ENCODE measurements at regions of chr7 and their contacts with region 1.

Region 1: GRCh38 chr7:44087911-44088838 is 5.8 kb upstream of the POLM start:
- DNase-seq: peak; percentile 58 to 78
- ATAC-seq: peak; percentile 43 to 82 (median 72)
- H3K4me3 ChIP-seq: no peak overlapping the region
- H3K27ac ChIP-seq: peak overlapping the region; percentile 67 to 88 (median 80)
- H3K4me1 ChIP-seq: peaks cover 0 to 31% (median 20%) of the 10 kb centered on the region in 9 donors
- H3K27me3 ChIP-seq: no peaks in the 10 kb centered on the region
- CTCF ChIP-seq: no peak

Region 2: DNA sequence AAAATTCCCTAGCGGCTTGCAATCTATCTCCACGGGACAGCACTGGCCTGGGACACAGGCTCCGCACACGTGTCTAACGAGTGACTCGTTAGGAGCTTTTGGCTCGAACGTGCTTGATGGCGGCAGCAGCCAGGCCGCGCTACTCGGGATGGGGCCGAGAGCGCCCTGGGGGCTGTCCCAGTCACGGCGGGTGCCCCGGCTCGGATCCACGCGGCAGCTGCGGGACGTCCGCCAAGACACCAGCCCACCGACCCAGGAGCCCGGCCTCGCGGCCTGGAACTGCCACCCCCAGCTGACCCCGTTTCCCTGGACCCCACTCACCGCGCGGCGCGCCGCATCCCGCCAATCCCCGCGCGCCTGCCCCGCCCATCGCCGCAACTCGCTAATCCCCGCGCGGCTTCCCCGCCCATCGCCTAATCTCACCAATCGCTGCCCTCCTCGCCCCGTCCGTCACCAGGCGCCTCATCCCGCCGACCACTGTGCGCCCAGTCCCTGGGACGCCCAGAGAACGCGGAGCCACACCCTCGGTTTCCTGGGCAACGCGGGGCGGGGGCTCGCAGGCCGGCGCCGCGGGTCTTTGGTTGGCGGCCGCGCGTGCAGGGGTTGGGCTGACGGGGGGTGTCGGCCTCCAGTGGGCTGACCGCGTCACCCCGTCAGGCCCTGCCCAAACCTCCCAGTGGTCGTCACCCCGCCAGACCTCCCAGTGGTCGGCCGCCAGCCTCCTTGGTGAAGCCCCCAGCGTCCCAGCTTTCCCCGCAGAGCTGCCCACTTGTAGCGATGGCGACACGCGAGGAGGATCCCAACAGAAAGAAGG is 35.2 kb after region 1 on chr7 and contains the start of gene POLD2:
- intact Hi-C with region 1: loop called in 6 of 10 experiments (anchors 2 to 5 kb)
- DNase-seq: peak; percentile 99
- ATAC-seq: peak; percentile 98 to 99 (median 99)
- H3K4me3 ChIP-seq: peak within 1 kb of the TSS; percentile 33 to 90 (median 74)
- H3K27ac ChIP-seq: peak within 1 kb of the TSS; percentile 0 to 94 (median 88)
- H3K4me1 ChIP-seq: peaks cover 0 to 51% (median 18%) of the 10 kb centered on the region in 9 donors
- H3K27me3 ChIP-seq: no peaks in the 10 kb centered on the region
- CTCF ChIP-seq: peak in 1 of 9 donors; percentile 15
- total RNA-seq, gene POLD2: 64.4 to 92.0 (median 76.8) TPM

Region 3: DNA sequence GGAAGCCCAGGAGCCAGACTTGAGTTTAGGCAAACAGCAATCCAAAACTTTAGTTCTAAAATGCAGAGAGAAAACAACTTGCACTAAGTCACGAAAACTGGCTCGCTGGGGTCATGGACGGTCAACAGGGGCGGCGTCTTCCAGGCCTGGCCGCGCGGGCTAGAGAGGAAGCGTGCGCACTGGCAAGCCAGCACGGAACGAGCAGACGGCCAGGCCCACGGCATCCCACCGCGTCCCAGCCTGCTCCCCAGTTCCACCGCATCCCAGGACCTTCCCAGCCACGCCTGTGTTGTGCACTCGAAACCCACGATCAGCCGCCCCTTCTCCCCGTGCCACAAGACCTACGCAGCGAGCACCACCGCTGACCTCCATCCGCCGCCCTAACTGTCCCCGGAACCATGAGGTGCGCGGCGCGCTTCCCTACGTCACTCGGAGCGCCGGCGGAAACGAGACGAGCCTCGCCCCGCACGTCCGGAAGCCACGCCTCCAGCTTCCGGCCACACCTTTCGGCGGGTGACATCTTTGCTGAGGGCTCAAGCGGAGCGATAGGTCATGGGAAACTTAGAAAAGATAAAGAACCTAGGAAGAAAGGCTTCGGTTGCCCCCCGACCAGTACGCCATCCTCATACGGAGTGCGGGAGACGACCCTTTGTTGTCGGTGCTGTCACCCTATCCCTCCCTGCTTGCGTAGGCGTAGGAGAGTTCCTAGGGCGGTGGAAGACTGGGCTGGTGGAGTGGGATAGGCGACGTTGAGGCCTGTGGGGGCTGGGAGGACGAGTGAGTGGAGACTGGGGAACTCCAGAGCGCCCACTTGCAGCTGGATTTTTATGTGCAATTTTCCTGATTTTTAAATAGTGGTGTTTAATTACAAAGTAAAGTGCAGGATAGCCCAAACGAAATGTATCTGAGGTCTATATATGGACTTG is 1023.4 kb after region 1 on chr7 and contains the start of gene TBRG4:
- intact Hi-C with region 1: no loop called
- DNase-seq: peak; percentile 95
- ATAC-seq: peak; percentile 99 to 100 (median 99)
- H3K4me3 ChIP-seq: peak within 1 kb of the TSS; percentile 57 to 89 (median 73)
- H3K27ac ChIP-seq: peak within 1 kb of the TSS; percentile 80 to 99 (median 94)
- H3K4me1 ChIP-seq: peaks cover 11 to 55% (median 43%) of the 10 kb centered on the region in 9 donors
- H3K27me3 ChIP-seq: no peaks in the 10 kb centered on the region
- CTCF ChIP-seq: peak in 7 of 9 donors; percentile 9 to 65 (median 50)
- total RNA-seq, gene TBRG4: 57.1 to 88.2 (median 66.7) TPM

Measured in heart right ventricle (tissue), 16 donors.